Activated CD4-positive, alpha-beta memory T cell treated with anti-CD3 and anti-CD28 coated beads for 36 hours (primary cell): ENCODE measurements at regions of chr17 and their contacts with region 1.

Region 1: DNA sequence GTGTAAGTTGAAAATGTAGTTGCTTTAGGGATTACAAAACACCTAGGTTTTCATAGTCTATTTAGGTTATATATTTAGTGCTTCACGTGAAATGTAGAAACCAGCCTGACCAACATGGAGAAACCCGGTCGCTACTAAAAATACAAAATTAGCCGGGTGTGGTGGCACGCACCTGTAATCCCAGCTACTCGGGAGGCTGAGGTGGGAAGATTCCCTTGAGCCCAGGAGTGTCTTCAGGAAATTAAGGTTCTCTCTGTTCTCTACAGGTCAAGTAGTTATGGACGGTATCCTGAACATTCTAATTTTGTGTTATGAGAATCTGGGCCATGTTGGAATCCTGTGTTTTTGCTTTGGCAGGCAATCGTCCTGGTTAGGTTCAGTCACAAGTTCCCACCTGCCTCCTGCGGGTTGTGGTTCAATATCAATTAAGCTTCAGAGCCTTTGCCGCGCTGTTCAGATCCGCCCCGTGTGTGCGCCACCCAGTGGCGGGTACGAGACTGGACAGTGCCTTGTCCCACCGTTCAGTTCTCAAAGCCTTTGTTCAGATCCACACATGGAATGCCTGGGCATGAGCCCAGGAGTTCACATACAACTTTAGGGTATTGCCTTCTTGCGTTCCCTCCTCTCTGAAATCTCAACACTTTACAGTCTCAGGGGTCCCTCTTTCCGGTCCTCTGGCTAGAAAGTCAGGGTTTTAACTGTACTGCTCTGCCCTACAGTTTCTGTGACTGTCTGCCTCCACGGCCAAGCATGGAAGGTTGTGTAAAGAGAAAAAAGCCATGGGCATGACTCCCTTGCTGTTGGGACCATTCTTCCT is 41.7 kb downstream of the HEATR6 start:
- DNase-seq: peak; percentile 78
- H3K4me3 Mint-ChIP-seq: peak overlapping the region; percentile 32
- H3K27ac Mint-ChIP-seq: peak overlapping the region; percentile 40
- H3K4me1 Mint-ChIP-seq: peaks cover 5% of the 10 kb centered on the region
- H3K27me3 Mint-ChIP-seq: peaks cover 15% of the 10 kb centered on the region

Region 2: GRCh38 chr17:59870482-59870881 is 166.5 kb before region 1 on chr17:
- CTCF ChIA-PET with region 1: no interaction called
- POLR2A ChIA-PET with region 1: no interaction called
- intact Hi-C with region 1: no loop called
- DNase-seq: no peak
- H3K4me3 Mint-ChIP-seq: no peak overlapping the region
- H3K27ac Mint-ChIP-seq: no peak overlapping the region
- H3K4me1 Mint-ChIP-seq: no peaks in the 10 kb centered on the region
- H3K27me3 Mint-ChIP-seq: no peaks in the 10 kb centered on the region

Region 3: DNA sequence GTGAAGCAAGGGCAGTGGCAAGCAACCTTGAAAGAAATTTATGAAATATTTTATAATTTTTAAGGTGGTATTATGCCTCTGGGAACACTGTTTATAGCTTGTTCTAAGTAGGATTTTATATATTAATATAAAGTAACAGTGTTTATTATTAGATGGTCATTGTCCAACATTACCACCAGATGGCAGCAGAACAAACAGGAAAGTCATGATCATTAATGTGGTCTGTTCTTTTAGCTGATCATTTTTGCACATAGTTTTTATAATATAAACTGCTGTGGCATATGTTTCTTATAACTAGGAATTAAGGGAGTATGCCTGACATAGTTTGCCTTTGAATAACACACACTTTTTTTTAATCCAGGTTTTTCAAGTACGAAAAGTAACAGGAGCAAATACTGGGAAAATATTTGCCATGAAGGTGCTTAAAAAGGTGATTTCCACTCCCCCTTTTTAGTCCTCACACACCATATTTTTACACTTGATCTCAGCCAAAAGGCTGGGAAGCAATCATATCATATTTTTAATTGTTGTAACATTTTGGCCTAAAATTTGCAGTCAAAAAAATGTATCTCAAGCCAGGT is 122.6 kb before region 1 on chr17:
- CTCF ChIA-PET with region 1: interaction called, 14 read pairs
- POLR2A ChIA-PET with region 1: interaction called, 3 read pairs
- intact Hi-C with region 1: no loop called
- DNase-seq: no peak
- H3K4me3 Mint-ChIP-seq: no peak overlapping the region
- H3K27ac Mint-ChIP-seq: no peak overlapping the region
- H3K4me1 Mint-ChIP-seq: no peaks in the 10 kb centered on the region
- H3K27me3 Mint-ChIP-seq: no peaks in the 10 kb centered on the region

Region 4: GRCh38 chr17:60049936-60050335 is 12.9 kb after region 1 on chr17:
- CTCF ChIA-PET with region 1: interaction called, 26 read pairs
- POLR2A ChIA-PET with region 1: no interaction called
- intact Hi-C with region 1: no loop called
- DNase-seq: no peak
- H3K4me3 Mint-ChIP-seq: no peak overlapping the region
- H3K27ac Mint-ChIP-seq: no peak overlapping the region
- H3K4me1 Mint-ChIP-seq: no peaks in the 10 kb centered on the region
- H3K27me3 Mint-ChIP-seq: no peaks in the 10 kb centered on the region

Region 5: DNA sequence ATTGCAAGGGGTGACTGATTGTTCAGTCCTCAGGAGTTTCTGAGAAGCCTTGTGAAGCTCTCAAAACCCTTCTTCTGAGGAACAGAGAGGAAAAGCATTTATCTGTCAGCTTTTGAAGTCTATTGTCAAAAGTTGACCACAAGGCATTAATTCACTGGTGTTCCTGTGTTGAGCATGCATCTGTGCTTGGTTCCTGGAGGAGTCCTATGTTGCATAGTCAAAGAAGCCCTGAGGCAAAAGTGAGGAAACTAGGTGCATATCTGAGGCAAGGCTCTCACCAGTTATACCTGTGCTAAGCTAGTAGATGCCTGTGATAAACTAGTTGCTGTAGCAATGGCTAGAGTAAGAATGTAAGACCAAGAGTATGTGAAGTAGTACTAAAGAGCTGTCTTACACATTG is 43.5 kb after region 1 on chr17:
- CTCF ChIA-PET with region 1: no interaction called
- POLR2A ChIA-PET with region 1: no interaction called
- intact Hi-C with region 1: no loop called
- DNase-seq: no peak
- H3K4me3 Mint-ChIP-seq: no peak overlapping the region
- H3K27ac Mint-ChIP-seq: no peak overlapping the region
- H3K4me1 Mint-ChIP-seq: peaks cover 21% of the 10 kb centered on the region
- H3K27me3 Mint-ChIP-seq: no peaks in the 10 kb centered on the region

Region 6: GRCh38 chr17:60135151-60135950 is 98.3 kb after region 1 on chr17:
- CTCF ChIA-PET with region 1: interaction called, 5 read pairs
- POLR2A ChIA-PET with region 1: no interaction called
- intact Hi-C with region 1: loop called (anchors 10 kb)
- DNase-seq: peak; percentile 92
- H3K4me3 Mint-ChIP-seq: peak overlapping the region; percentile 88
- H3K27ac Mint-ChIP-seq: peak overlapping the region; percentile 72
- H3K4me1 Mint-ChIP-seq: peaks cover 30% of the 10 kb centered on the region
- H3K27me3 Mint-ChIP-seq: peaks cover 22% of the 10 kb centered on the region

Region 7: GRCh38 chr17:60435244-60436167 is 398.5 kb after region 1 on chr17:
- CTCF ChIA-PET with region 1: interaction called, 5 read pairs
- POLR2A ChIA-PET with region 1: no interaction called
- intact Hi-C with region 1: loop called (anchors 10 kb)
- DNase-seq: peak; percentile 62
- H3K4me3 Mint-ChIP-seq: no peak overlapping the region
- H3K27ac Mint-ChIP-seq: no peak overlapping the region
- H3K4me1 Mint-ChIP-seq: peaks cover 3% of the 10 kb centered on the region
- H3K27me3 Mint-ChIP-seq: peaks cover 2% of the 10 kb centered on the region